ENCODE measurements at regions of chr1 and their contacts with region 1.

Region 1: GRCh38 chr1:27772933-27773825 is at the start of gene STX12:
- DNase-seq: peak; percentile 100
- H3K4me3 Mint-ChIP-seq: peak within 1 kb of the TSS; percentile 90
- H3K27ac Mint-ChIP-seq: peak within 1 kb of the TSS; percentile 97
- H3K4me1 Mint-ChIP-seq: peaks cover 31% of the 10 kb centered on the region
- H3K27me3 Mint-ChIP-seq: no peaks in the 10 kb centered on the region
- total RNA-seq, gene STX12: 31.9 to 35.7 TPM

Region 2: GRCh38 chr1:27671964-27672749 is 101.0 kb before region 1 on chr1 and contains the start of gene IFI6:
- CTCF ChIA-PET with region 1: interaction called, 10 read pairs
- intact Hi-C with region 1: loop called (anchors 1 kb)
- DNase-seq: peak; percentile 89
- H3K4me3 Mint-ChIP-seq: peak within 1 kb of the TSS; percentile 95
- H3K27ac Mint-ChIP-seq: peak within 1 kb of the TSS; percentile 91
- H3K4me1 Mint-ChIP-seq: peaks cover 30% of the 10 kb centered on the region
- H3K27me3 Mint-ChIP-seq: no peaks in the 10 kb centered on the region
- total RNA-seq, gene IFI6: 115 to 125 TPM

Region 3: DNA sequence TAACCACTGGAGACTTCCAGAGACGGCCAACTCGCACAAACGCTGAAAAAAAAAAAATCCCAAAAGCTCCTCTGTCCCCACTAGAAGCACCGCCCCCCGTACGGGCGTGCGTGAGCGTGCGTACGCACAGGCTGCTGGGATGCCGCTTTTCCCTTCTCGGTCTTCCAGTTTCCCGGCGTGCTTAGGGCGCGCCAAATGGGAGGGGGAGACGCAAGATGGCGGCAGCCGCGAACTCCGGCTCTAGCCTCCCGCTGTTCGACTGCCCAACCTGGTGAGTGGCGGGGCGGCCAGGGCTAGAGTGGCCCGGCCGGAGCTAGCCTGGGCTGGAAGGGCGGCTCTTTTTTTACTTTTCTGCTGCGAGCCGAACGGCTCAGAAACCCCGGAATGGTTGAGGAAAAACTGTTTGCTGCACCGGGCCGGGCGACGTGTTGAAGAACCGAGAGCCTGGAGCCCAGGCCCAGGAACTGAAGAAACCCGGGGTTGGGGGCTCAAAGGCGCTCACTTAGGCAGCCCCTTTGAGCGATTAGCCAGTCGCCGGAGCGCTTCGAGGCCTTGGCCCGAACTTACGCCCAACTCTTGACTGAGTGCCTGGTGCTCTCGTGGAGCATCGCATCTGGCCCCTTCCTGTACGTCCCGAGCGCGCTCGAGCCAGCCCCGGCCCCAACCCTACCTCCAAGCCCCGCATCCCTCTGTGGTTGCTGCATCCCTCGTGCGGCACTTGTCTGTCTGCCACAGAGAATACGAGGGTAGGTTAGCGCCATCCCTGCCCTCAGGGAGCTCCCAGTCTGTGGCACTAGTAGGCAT is 57.6 kb after region 1 on chr1 and contains the start of gene PPP1R8:
- CTCF ChIA-PET with region 1: no interaction called
- intact Hi-C with region 1: loop called (anchors 1 kb)
- DNase-seq: peak; percentile 94
- H3K4me3 Mint-ChIP-seq: peak within 1 kb of the TSS; percentile 95
- H3K27ac Mint-ChIP-seq: peak within 1 kb of the TSS; percentile 87
- H3K4me1 Mint-ChIP-seq: peaks cover 39% of the 10 kb centered on the region
- H3K27me3 Mint-ChIP-seq: no peaks in the 10 kb centered on the region
- total RNA-seq, gene PPP1R8: 34.1 to 35.8 TPM

Region 4: DNA sequence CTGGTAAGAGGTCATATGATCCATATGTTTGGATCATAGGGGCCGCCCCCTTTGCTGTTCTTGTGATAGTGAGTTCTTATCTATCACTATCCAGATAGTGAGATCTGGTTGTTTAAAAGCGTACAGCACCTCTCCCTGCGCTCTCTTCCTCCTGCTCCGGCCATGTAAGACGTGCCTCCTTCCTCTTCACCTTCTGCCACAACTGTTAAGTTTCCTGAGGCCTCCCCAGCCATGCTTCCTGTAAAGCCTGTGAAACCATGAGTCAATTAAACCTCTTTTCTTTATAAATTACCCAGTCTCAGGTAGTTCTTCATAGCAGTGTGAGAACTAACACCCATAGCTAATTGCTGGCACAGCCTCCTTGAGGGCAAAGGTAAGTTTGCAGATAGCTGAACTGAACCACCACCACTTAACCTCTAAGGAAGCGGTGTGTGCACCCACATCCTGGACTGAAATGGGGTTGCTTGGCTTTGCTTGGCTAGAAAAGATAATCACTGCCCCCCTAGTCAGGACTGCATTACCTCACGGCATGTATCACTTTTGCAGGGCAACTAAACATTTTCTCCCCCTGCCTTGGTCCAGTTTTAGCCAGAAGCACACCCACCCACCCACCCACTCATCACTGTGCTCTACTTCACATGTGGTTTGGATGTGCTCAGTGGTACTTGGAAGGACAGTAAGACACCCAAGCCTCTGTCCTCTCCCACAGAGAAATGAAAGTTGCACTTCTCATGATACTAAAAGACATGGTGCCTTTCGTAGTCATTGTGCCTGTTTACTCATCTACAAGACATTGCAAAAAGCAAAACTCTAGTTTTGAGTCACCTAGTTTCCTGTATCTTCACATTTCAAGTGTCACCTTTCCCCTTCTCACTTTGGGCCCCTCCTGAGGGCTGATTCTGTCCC is 426.4 kb after region 1 on chr1:
- CTCF ChIA-PET with region 1: no interaction called
- intact Hi-C with region 1: loop called (anchors 5 kb)
- DNase-seq: peak; percentile 75
- H3K4me3 Mint-ChIP-seq: peak overlapping the region; percentile 31
- H3K27ac Mint-ChIP-seq: peak overlapping the region; percentile 90
- H3K4me1 Mint-ChIP-seq: peaks cover 42% of the 10 kb centered on the region
- H3K27me3 Mint-ChIP-seq: no peaks in the 10 kb centered on the region

Measured in activated naive CD4-positive, alpha-beta T cell treated with anti-CD3 and anti-CD28 coated beads for 36 hours (primary cell).